Lower leg skin (tissue), 4 donors: ENCODE measurements at regions of chr1 and their contacts with region 1.

Region 1: DNA sequence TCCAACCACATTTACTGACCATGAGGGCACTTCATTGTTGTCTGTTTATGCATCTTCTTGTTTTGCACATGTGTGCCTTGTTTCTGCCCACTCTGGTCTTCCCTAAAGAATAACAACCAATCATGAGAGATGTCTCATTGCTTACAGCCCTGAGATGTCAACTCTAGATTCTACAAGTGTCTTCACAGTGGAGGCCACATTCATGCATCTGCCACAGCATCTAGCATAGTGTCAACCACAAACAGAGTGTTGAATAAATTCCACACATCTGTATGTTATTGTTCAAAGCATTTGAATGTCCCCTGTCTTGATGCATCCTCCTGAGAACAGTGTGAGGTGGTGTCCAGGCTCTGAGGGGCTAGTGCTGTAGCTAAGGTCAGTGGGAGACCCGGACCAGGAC is 43.1 kb downstream of the KCNC4 start:
- DNase-seq: no peak
- H3K4me3 ChIP-seq: no peak overlapping the region
- CTCF ChIP-seq: no peak
- POLR2A ChIP-seq: no peak

Region 2: DNA sequence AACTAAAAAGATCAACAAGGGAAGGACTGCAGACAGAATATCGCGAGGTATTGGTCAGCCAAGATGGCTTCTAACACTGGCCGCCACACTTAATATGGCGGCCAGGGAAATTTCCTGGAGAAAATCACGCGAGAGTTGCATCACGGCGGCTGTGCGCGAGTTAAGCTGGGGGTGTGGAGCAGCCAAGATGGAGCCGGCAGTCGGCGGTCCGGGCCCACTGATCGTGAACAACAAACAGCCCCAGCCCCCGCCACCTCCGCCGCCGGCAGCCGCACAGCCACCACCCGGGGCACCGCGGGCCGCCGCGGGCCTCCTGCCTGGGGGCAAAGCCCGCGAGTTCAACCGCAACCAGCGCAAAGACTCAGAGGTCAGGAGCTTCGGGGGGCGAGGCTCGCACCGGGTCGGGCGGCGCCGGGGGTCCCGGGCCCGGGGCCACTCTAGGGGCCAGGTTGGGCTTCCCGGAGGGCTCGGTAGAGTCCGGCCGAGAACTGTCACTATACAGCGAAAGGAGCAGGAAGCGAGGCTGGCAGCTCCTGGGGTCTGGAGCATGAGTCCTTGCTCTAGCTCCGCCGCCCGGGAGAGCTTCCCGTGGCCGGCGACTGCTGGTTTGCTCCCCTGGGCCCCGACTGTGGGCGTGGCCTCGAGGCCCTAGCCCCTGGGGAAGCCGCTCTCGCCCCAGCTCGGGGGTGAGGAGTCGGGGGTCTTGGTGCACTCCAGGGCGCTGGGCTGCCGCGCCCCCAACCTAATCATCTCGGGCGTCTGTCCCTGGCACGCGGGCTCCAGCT is 218.6 kb before region 1 on chr1 and contains the start of gene STRIP1:
- intact Hi-C with region 1: no loop called
- DNase-seq: peak; percentile 94 to 98
- H3K4me3 ChIP-seq: peak within 1 kb of the TSS; percentile 100
- CTCF ChIP-seq: no peak
- POLR2A ChIP-seq: no peak
- total RNA-seq, gene STRIP1: 45.0 to 64.1 (median 50.9) TPM

Region 3: GRCh38 chr1:110298991-110299390 is 45.8 kb after region 1 on chr1:
- intact Hi-C with region 1: loop called (anchors 2 kb)
- DNase-seq: no peak
- H3K4me3 ChIP-seq: no peak overlapping the region
- CTCF ChIP-seq: no peak
- POLR2A ChIP-seq: no peak